K562 (cell line): ENCODE measurements at regions of chr22 and their contacts with region 1.

Region 1: DNA sequence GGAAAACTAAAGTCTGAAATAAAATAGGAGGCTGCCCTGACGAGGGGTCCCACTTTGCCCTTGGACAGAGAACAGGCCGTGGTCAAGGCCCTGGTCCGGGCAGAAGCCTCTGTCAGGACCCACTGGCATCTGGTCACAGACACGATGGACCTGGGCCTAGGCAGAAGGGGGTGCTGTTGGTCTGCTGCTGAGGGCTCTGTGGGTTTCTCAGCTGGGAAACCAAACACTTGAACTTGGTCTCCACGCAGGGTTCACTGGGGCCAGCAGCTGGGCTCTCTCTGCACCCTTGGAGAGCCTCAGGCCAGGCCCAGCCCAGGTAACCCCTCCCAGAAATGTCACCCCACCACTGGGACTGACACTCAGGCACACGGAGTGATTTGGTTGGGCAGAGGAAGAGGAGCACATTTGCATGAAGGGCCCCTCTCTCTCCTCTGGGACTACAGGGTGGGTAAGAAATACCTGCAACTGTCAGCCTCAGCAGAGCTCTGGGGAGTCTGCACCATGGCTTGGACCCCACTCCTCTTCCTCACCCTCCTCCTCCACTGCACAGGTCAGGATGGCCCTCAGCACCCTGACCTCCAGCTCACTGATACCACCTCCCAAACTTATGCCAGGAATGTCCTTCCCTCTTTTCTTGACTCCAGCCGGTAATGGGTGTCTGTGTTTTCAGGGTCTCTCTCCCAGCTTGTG is 48.1 kb upstream of the TOP3B start:
- DNase-seq: peak; percentile 69 to 90 (median 80)
- ATAC-seq: peak; percentile 83
- H3K4me3 ChIP-seq: no peak overlapping the region
- H3K27ac ChIP-seq: no peak overlapping the region
- H3K4me1 ChIP-seq: peaks cover 3 to 10% of the 10 kb centered on the region in 2 experiments; a peak in 4 of 5 replicates
- H3K27me3 ChIP-seq: peaks cover 12 to 44% of the 10 kb centered on the region in 2 experiments; a peak in 4 of 5 replicates
- CTCF ChIP-seq: no peak
- EP300 ChIP-seq: no peak
- POLR2A ChIP-seq: no peak
- RAD21 ChIP-seq: no peak

Region 2: GRCh38 chr22:21917181-21917958 is 113.3 kb before region 1 on chr22:
- CTCF ChIA-PET with region 1: no interaction called
- POLR2A ChIA-PET with region 1: no interaction called
- in situ Hi-C with region 1: no loop called
- intact Hi-C with region 1: no loop called
- DNase-seq: peak in 1 of 4 experiments; percentile 48
- ATAC-seq: peak; percentile 20
- H3K4me3 ChIP-seq: no peak overlapping the region
- H3K27ac ChIP-seq: no peak overlapping the region
- H3K4me1 ChIP-seq: peaks cover 0 to 39% of the 10 kb centered on the region in 2 experiments; a peak in 3 of 5 replicates
- H3K27me3 ChIP-seq: no peaks in the 10 kb centered on the region
- CTCF ChIP-seq: peak in 2 of 3 experiments; percentile 23 to 47; a peak in 2 of 6 replicates
- EP300 ChIP-seq: no peak
- POLR2A ChIP-seq: no peak
- RAD21 ChIP-seq: peak in 1 of 2 experiments; percentile 62; a peak in 2 of 4 replicates

Region 3: DNA sequence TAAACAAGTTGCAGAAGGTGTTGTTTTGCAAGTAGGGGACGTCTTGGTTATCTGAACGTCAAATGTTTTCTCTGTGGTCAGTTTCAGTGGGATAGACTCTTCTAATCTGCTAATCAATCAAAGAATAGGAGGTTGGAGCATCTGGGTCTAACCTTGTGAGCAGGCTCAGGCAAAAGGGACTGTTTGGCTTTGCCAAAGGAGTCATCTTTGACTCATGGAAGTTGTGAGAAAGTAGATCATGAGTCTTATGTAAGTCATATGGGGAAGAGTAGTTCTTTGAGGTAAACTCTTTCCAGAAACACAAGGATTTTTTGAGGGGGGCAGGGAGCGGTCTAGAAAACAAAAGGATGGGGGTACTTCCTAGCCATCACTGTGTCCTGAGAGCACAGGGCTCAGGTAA is 21.0 kb before region 1 on chr22:
- CTCF ChIA-PET with region 1: no interaction called
- POLR2A ChIA-PET with region 1: interaction called, 14 read pairs
- in situ Hi-C with region 1: no loop called
- intact Hi-C with region 1: no loop called
- DNase-seq: no peak
- ATAC-seq: peak; percentile 4; the same call in 2 of the 3 replicates
- H3K4me3 ChIP-seq: no peak overlapping the region
- H3K27ac ChIP-seq: no peak overlapping the region
- H3K4me1 ChIP-seq: no peaks in the 10 kb centered on the region
- H3K27me3 ChIP-seq: peaks cover 33 to 57% of the 10 kb centered on the region in 2 experiments
- CTCF ChIP-seq: no peak
- EP300 ChIP-seq: no peak
- POLR2A ChIP-seq: no peak
- RAD21 ChIP-seq: no peak

Region 4: DNA sequence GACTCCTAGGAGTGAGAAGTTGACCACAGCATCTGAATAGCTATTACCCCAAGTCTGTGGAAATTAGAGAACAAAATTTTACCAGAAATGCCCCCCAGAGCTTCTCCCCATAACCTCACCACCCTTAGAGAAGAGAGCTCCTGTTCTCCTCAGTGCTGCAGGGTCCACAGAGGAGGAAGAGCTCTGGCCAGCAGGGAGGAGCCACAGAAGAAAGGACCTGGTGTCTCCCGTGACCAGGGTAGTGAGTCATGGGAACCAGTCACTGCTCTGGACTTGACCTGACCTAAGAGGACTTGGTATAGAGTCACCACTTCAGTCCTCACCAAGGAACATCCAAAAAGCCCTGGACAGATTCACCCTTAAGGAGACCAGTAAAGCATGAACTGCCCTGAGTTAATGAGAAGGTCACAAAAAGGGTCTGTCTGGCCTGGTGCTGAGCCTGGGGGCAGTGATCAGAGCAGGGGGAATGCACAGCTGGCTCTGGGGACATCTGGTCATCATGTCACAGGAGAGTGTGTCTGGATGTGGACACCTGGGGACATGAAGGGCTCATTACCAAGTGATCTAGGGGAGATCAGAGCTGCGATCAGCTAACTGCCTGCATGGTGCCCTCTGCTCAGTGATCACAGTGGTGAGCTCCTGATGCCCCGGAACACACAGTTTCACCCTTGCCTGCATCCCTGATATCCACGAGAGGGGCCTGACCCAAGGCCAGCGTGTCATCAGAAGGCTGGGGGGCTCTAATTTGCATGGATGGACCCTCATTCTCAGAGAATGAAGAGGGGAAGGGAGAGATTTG is 55.3 kb after region 1 on chr22:
- CTCF ChIA-PET with region 1: no interaction called
- POLR2A ChIA-PET with region 1: interaction called, 5 read pairs
- in situ Hi-C with region 1: no loop called
- intact Hi-C with region 1: loop called (anchors 10 kb)
- DNase-seq: peak in 2 of 4 experiments; percentile 68 to 76
- ATAC-seq: peak; percentile 68
- H3K4me3 ChIP-seq: no peak overlapping the region
- H3K27ac ChIP-seq: no peak overlapping the region
- H3K4me1 ChIP-seq: no peaks in the 10 kb centered on the region
- H3K27me3 ChIP-seq: peaks cover 53 to 55% of the 10 kb centered on the region in 2 experiments
- CTCF ChIP-seq: peak in 1 of 3 experiments; percentile 8; a peak in 1 of 6 replicates
- EP300 ChIP-seq: peak; percentile 10; the same call in 1 of the 2 replicates
- POLR2A ChIP-seq: no peak
- RAD21 ChIP-seq: no peak

Region 5: DNA sequence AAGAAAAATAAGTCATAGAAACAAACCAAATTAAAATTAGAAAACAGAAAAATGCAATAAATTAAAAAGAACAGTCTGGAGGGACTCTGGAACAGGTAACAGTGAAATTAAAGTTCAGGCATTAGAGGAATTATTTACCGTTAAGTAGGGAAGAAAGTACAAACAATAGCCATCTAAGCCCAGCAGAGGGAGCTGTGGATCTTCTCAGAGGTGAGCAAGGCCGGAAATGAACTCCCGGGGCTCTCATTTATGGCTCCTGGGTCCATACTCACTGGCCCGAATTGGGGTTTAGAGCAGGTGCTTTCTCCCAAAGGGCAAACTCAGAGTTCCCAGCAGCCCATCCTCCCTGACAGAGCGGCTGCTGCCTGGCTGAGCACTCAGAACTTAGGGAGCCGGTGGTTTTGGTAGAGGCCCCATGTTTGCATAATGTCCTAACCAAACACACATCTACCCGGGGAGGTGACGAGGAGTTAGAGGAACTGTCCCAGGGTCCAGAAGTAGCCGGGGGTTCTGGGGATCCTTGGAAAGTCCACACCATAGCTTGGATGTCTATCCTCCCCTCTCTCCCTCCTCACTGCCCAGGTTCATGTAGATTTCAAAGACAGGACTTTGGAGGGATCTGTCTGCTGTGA is 126.2 kb after region 1 on chr22:
- CTCF ChIA-PET with region 1: interaction called, 6 read pairs
- POLR2A ChIA-PET with region 1: interaction called, 3 read pairs
- in situ Hi-C with region 1: no loop called
- intact Hi-C with region 1: loop called (anchors 1 kb)
- DNase-seq: peak; percentile 98 to 100 (median 99)
- ATAC-seq: peak; percentile 98
- H3K4me3 ChIP-seq: no peak overlapping the region
- H3K27ac ChIP-seq: peak overlapping the region; percentile 1; the same call in 1 of the 3 replicates
- H3K4me1 ChIP-seq: peaks cover 0 to 4% of the 10 kb centered on the region in 2 experiments; a peak in 1 of 5 replicates
- H3K27me3 ChIP-seq: peaks cover 8 to 9% of the 10 kb centered on the region in 2 experiments
- CTCF ChIP-seq: peak in 1 of 3 experiments; percentile 99; a peak in 2 of 6 replicates
- EP300 ChIP-seq: peak; percentile 79
- POLR2A ChIP-seq: no peak
- RAD21 ChIP-seq: no peak

Region 6: DNA sequence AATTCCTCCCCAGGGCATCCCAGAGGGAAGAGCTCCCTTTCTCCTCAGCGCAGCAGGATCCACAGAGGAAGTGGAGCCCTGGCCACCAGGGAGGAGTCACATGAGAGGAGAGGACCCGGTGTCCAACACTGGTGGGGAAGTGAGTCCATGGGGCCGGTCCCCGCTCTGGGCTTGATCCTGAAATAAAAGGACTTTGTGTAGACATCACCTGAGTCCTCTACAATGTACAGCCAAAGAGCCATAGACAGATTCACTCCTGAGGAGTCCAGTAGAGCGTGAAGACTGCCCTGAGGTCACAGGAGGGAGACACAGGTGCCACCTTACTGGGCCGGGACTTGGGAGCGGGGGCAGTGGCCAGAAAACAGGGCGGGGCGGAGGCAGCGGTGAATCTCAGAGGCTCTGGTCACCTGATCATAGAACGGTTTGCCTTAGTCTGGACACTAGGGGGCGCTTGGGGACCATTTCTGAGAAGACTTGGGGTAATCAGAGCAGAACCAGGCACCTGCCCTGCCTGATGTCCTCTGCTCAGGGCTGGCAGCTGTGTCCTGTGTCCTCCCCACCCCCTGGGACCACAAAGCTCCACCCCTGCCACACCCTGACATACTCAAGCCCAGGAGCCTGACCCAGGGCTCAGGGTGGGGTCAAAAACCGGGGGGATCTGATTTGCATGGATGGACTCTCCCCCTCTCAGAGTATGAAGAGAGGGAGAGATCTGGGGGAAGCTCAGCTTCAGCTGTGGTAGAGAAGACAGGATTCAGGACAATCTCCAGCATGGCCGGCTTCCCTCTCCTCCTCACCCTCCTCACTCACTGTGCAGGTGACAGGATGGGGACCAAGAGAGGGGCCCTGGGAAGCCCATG is 326.6 kb after region 1 on chr22:
- CTCF ChIA-PET with region 1: no interaction called
- POLR2A ChIA-PET with region 1: no interaction called
- in situ Hi-C with region 1: no loop called
- intact Hi-C with region 1: no loop called
- DNase-seq: peak; percentile 99 to 100 (median 100)
- ATAC-seq: peak; percentile 99
- H3K4me3 ChIP-seq: no peak overlapping the region
- H3K27ac ChIP-seq: no peak overlapping the region
- H3K4me1 ChIP-seq: peaks cover 0 to 5% of the 10 kb centered on the region in 2 experiments; a peak in 1 of 5 replicates
- H3K27me3 ChIP-seq: peaks cover 11 to 20% of the 10 kb centered on the region in 2 experiments; a peak in 3 of 5 replicates
- CTCF ChIP-seq: peak; percentile 98 to 100 (median 99)
- EP300 ChIP-seq: peak; percentile 74
- POLR2A ChIP-seq: no peak
- RAD21 ChIP-seq: peak in 1 of 2 experiments; percentile 98; a peak in 3 of 4 replicates

Region 7: GRCh38 chr22:22422629-22423112 is 392.0 kb after region 1 on chr22:
- CTCF ChIA-PET with region 1: no interaction called
- POLR2A ChIA-PET with region 1: no interaction called
- in situ Hi-C with region 1: no loop called
- intact Hi-C with region 1: loop called (anchors 10 kb)
- DNase-seq: peak; percentile 85 to 96 (median 89)
- ATAC-seq: peak; percentile 92
- H3K4me3 ChIP-seq: no peak overlapping the region
- H3K27ac ChIP-seq: no peak overlapping the region
- H3K4me1 ChIP-seq: no peaks in the 10 kb centered on the region
- H3K27me3 ChIP-seq: peaks cover 31 to 34% of the 10 kb centered on the region in 2 experiments
- CTCF ChIP-seq: peak in 1 of 3 experiments; percentile 99; a peak in 2 of 6 replicates
- EP300 ChIP-seq: no peak
- POLR2A ChIP-seq: no peak
- RAD21 ChIP-seq: no peak